Caco-2 (cell line): ENCODE measurements at regions of chr15 and their contacts with region 1.

Region 1: GRCh38 chr15:76258471-76258870 is 52.8 kb downstream of the ETFA start:
- DNase-seq: no peak
- H3K4me3 ChIP-seq: no peak overlapping the region
- H3K4me3 Mint-ChIP-seq: no peak overlapping the region
- H3K27ac Mint-ChIP-seq: no peak overlapping the region
- H3K4me1 ChIP-seq: peaks cover 6% of the 10 kb centered on the region; the same call in 1 of the 2 replicates
- H3K4me1 Mint-ChIP-seq: peaks cover 3% of the 10 kb centered on the region
- H3K27me3 ChIP-seq: no peaks in the 10 kb centered on the region
- H3K27me3 Mint-ChIP-seq: no peaks in the 10 kb centered on the region
- CTCF ChIP-seq: no peak

Region 2: DNA sequence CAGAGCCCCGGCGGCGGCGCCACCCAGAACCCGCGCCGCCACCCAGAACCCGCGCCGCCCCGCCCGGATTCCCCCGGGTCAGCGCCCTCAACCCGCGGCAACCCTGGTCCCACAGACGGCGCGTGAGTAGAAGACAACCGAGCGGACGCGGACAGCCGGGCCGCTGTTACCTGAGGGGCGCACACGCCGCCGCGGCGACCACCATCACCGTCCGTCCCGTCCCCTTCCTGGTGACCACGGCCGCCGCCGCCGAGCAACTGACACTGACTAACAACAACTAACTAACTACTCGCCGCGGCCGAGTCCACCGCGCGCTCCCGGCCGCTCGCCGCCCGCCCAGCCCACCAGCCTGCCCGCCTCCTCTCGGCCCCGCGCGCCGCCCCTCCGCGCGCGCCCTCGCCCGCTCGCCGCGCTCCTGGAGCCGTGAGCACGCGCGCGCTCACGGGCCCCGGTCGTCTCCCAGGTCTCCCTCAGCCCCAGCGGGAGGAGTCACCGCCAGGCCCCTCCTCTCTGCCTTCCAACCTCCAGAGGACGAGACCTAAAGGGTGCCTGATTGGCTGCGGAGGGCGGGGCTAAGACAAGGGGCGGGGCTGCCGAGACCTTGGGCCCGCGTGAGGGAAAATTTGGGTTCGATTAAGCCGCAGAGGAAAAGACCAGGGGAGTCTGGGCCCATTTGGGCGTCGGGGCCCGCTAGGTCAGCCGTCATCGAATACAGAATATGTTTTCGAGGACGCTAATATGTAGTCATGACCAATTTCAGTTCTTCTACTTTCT is 1161.6 kb after region 1 on chr15 and contains the start of gene PEAK1:
- CTCF ChIA-PET with region 1: no interaction called
- POLR2A ChIA-PET with region 1: interaction called, 10 read pairs
- intact Hi-C with region 1: no loop called
- DNase-seq: peak; percentile 99
- H3K4me3 ChIP-seq: peak within 1 kb of the TSS; percentile 93
- H3K4me3 Mint-ChIP-seq: peak within 1 kb of the TSS; percentile 94
- H3K27ac Mint-ChIP-seq: peak within 1 kb of the TSS; percentile 97
- H3K4me1 ChIP-seq: peaks cover 17% of the 10 kb centered on the region
- H3K4me1 Mint-ChIP-seq: peaks cover 8% of the 10 kb centered on the region
- H3K27me3 ChIP-seq: no peaks in the 10 kb centered on the region
- H3K27me3 Mint-ChIP-seq: no peaks in the 10 kb centered on the region
- CTCF ChIP-seq: no peak
- total RNA-seq, gene PEAK1: 18.4 and 21.8 TPM in 2 replicates